Endothelial cell of umbilical vein (primary cell): ENCODE measurements at regions of chr14 and their contacts with region 1.

Region 1: GRCh38 chr14:105203057-105203531 is 22.0 kb upstream of the NUDT14 start:
- DNase-seq: peak; percentile 55
- H3K4me3 ChIP-seq: no peak overlapping the region
- H3K27ac ChIP-seq: no peak overlapping the region
- H3K4me1 ChIP-seq: peaks cover 24% of the 10 kb centered on the region
- H3K27me3 ChIP-seq: no peaks in the 10 kb centered on the region
- CTCF ChIP-seq: peak; percentile 94 to 96
- POLR2A ChIP-seq: no peak

Region 2: DNA sequence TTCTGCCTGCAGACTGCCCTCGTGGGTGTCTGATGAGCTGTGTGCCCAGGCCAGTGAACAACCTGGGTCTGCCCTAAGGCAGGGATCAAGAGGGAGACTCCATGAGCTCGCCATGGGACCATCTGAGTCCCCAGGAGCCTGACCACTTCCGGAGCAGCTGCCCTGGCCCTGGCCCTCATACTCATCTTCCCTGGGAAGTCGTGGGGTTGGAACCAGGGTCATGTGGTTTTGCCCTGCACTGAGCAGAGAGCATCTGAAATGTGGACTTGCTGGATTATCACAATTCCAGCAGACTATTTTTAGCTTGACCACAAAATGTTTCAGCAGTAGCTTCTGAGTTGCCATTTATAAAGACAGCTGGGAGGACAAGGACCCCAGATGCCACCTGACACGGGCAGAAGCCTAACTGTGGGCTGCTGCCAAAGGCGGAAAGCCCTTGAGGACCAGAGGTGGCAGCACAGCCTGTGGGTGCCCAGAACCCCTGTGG is 52.0 kb after region 1 on chr14:
- CTCF ChIA-PET with region 1: no interaction called
- POLR2A ChIA-PET with region 1: no interaction called
- dilution Hi-C with region 1: no loop called
- intact Hi-C with region 1: loop called (anchors 10 kb)
- DNase-seq: no peak
- H3K4me3 ChIP-seq: no peak overlapping the region
- H3K27ac ChIP-seq: no peak overlapping the region
- H3K4me1 ChIP-seq: no peaks in the 10 kb centered on the region
- H3K27me3 ChIP-seq: no peaks in the 10 kb centered on the region
- CTCF ChIP-seq: no peak
- POLR2A ChIP-seq: no peak

Region 3: DNA sequence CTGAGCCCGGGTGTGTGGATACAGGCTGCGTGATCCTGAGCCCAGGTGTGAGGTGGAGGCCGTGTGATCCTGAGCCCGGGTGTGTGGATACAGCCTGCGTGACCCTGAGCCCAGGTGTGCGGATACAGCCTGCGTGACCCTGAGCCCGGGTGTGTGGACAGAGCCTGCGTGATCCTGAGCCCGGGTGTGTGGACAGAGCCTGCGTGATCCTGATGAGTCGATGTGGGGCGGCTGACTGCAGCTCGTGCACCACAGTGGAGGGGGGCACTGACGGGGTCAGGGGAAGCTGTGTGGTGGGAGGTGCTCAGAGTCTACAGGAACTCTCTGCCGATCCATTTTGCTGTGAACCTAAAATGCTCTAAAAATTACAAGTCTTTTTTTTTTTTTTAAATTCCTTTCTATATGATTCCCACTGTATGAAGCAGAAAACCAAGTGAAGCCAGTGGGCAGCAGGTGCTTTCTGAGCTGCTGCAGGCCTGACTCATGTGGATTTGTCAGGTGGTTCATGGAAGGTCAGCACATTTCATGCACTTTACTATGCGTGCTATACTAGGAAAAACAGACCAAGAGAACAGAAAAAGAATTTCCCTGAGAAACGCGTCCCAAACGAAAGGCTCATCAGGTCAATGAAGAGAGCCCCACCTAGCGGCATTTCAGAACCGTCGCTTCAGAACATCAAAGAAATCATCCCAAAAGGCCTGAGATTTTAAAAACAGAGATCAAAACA is 78.4 kb after region 1 on chr14:
- CTCF ChIA-PET with region 1: no interaction called
- POLR2A ChIA-PET with region 1: no interaction called
- dilution Hi-C with region 1: no loop called
- intact Hi-C with region 1: loop called (anchors 1 kb)
- DNase-seq: peak; percentile 61
- H3K4me3 ChIP-seq: no peak overlapping the region
- H3K27ac ChIP-seq: no peak overlapping the region
- H3K4me1 ChIP-seq: peaks cover 11% of the 10 kb centered on the region
- H3K27me3 ChIP-seq: no peaks in the 10 kb centered on the region
- CTCF ChIP-seq: peak; percentile 63 to 67
- POLR2A ChIP-seq: no peak

Region 4: DNA sequence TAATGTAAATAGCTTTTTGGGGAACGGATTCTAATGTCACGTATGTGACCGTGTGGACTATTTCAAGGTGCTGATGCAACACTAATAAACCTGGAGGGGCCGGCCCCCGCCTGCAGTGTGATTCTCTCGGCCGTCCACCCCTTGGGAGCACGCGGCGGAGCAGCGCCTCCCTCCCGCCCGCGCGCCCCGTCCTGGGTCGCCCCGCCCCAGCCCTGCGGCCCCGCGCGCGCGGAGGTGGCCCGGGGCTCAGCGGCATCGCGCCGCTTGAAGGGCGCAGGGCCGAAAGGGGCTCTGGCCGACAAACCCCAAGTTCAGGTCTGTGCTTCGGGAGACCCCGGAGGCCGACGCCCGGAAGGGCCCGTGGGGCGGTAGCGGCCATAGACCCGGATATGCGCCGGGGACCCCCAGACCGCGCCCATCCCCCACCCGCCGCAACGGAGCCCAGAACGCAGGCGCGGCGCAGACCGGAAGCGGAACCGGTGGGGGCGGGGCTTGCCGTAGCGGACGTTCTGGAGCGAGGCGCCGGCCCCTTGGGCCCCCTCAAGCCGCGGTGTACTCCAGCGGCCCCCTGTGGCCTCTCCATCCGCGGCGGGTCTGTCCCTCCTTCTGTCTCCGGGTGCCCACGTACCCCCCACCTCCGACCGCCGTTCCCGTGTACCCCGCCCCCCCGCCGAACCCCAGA is 195.1 kb after region 1 on chr14 and contains the start of gene TEX22:
- CTCF ChIA-PET with region 1: no interaction called
- POLR2A ChIA-PET with region 1: no interaction called
- dilution Hi-C with region 1: no loop called
- intact Hi-C with region 1: no loop called
- DNase-seq: peak; percentile 79
- H3K4me3 ChIP-seq: peak within 1 kb of the TSS; percentile 51 to 67 (median 62)
- H3K27ac ChIP-seq: peak within 1 kb of the TSS; percentile 60
- H3K4me1 ChIP-seq: peaks cover 21% of the 10 kb centered on the region
- H3K27me3 ChIP-seq: no peaks in the 10 kb centered on the region
- CTCF ChIP-seq: peak in 1 of 2 donors; percentile 37
- POLR2A ChIP-seq: peak; percentile 89
- total RNA-seq, gene TEX22: 1.1 and 2.1 TPM in 2 replicates